Activated T-helper 1 cell treated with anti-CD3 and anti-CD28 coated beads, Interleukin-12 subunit alpha, Interleukin-12 subunit beta, Interleukin-2, Interleukin-4 antibody, amounts not matched to agents 30 ng/mL and 10 ng/mL and 1 ng/mL, durations not matched to agents 14 hours and 24 hours and 36 hours (primary cell): ENCODE measurements at regions of chr20 and their contacts with region 1.

Region 1: DNA sequence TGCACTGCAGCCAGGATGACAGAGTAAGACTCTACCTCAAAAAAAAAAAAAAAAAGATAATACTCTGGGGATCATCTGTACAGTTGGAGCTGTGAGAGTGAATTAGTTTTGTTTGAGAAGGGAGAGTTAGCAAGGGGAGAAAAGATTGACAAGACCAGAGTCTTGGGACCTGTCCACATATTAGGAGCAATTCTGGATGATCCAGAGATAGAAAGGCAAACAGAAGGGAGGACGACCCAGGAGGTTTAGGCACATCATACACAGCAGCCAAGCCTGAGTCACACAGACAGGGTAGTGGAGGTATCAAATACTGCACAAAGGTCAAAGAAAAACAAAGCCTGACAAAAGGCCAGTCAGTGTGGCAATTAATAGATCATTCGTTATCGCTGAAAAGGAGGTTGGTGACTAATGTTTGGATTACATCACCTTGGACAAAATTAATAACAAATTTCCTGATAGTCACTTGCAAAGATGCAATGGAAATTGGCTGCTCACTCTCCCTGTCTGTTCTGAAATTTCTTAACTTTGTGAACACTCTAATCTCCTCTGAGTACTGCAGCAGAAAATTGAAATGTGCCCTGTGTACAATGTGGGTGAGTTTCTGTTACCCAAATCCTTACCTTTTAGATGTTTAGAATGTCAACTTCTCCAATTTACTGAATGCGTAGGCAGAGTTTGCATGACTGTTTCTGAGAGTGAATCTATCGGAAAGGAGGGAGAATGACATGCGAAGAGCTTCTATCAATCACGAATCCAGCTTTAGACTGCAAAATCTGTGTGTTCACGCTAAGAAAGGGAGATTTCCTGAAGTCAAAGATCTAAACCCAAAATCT is 105.4 kb downstream of the TSHZ2 start:
- DNase-seq: no peak
- H3K4me3 Mint-ChIP-seq: no peak overlapping the region
- H3K27ac Mint-ChIP-seq: no peak overlapping the region
- H3K4me1 Mint-ChIP-seq: peaks cover 19% of the 10 kb centered on the region
- H3K27me3 Mint-ChIP-seq: no peaks in the 10 kb centered on the region

Region 2: GRCh38 chr20:52923123-52923937 is 154.3 kb before region 1 on chr20:
- intact Hi-C with region 1: loop called (anchors 5 kb)
- DNase-seq: no peak
- H3K4me3 Mint-ChIP-seq: no peak overlapping the region
- H3K27ac Mint-ChIP-seq: no peak overlapping the region
- H3K4me1 Mint-ChIP-seq: no peaks in the 10 kb centered on the region
- H3K27me3 Mint-ChIP-seq: no peaks in the 10 kb centered on the region

Region 3: DNA sequence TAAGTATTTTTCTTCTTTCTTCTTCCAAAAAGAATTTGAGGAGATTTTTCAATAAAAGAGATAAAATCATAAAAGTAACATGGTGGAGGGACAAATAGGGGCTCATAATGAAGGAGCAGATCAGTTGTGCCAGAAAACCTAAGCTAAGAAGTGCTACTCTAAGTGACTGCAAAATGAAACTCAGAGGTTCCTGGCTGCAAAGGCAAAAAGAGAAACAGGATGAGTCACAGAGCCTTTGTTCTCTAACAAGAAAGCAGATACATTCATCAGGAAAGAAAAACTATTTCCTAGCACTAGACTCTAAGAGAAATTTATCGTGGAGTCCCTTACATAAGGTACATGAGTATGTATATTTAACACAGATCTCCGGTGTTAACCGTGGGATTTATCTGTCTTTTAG is 55.7 kb before region 1 on chr20:
- intact Hi-C with region 1: loop called (anchors 1 kb)
- DNase-seq: peak; percentile 33
- H3K4me3 Mint-ChIP-seq: peak overlapping the region; percentile 24
- H3K27ac Mint-ChIP-seq: peak overlapping the region; percentile 90
- H3K4me1 Mint-ChIP-seq: peaks cover 87% of the 10 kb centered on the region
- H3K27me3 Mint-ChIP-seq: no peaks in the 10 kb centered on the region

Region 4: GRCh38 chr20:53157443-53158408 is 80.1 kb after region 1 on chr20:
- intact Hi-C with region 1: no loop called
- DNase-seq: no peak
- H3K4me3 Mint-ChIP-seq: peak overlapping the region; percentile 12
- H3K27ac Mint-ChIP-seq: peak overlapping the region; percentile 50
- H3K4me1 Mint-ChIP-seq: peaks cover 65% of the 10 kb centered on the region
- H3K27me3 Mint-ChIP-seq: no peaks in the 10 kb centered on the region

Region 5: DNA sequence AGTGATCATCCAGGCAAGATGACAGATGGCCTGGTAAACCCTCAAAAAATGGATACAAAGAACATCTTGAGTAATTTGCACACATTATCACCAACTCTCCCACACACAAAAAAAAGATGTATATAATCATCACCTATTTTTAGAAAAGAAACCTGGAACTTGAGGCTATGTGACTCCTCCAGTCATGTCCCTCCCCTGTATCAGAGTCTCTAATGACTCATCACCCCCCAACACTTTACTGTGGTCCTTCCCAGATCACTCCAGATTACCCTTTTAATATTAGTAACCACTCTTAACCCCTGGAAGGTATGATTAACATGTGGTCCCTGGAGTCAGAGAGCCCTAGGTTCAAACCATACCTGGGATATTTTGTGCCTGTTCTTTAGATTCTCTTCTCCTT is 371.3 kb after region 1 on chr20:
- intact Hi-C with region 1: no loop called
- DNase-seq: no peak
- H3K4me3 Mint-ChIP-seq: no peak overlapping the region
- H3K27ac Mint-ChIP-seq: no peak overlapping the region
- H3K4me1 Mint-ChIP-seq: no peaks in the 10 kb centered on the region
- H3K27me3 Mint-ChIP-seq: no peaks in the 10 kb centered on the region

Region 6: GRCh38 chr20:53547664-53548239 is 470.2 kb after region 1 on chr20:
- intact Hi-C with region 1: loop called (anchors 10 kb)
- DNase-seq: peak; percentile 24
- H3K4me3 Mint-ChIP-seq: no peak overlapping the region
- H3K27ac Mint-ChIP-seq: no peak overlapping the region
- H3K4me1 Mint-ChIP-seq: no peaks in the 10 kb centered on the region
- H3K27me3 Mint-ChIP-seq: no peaks in the 10 kb centered on the region

Region 7: DNA sequence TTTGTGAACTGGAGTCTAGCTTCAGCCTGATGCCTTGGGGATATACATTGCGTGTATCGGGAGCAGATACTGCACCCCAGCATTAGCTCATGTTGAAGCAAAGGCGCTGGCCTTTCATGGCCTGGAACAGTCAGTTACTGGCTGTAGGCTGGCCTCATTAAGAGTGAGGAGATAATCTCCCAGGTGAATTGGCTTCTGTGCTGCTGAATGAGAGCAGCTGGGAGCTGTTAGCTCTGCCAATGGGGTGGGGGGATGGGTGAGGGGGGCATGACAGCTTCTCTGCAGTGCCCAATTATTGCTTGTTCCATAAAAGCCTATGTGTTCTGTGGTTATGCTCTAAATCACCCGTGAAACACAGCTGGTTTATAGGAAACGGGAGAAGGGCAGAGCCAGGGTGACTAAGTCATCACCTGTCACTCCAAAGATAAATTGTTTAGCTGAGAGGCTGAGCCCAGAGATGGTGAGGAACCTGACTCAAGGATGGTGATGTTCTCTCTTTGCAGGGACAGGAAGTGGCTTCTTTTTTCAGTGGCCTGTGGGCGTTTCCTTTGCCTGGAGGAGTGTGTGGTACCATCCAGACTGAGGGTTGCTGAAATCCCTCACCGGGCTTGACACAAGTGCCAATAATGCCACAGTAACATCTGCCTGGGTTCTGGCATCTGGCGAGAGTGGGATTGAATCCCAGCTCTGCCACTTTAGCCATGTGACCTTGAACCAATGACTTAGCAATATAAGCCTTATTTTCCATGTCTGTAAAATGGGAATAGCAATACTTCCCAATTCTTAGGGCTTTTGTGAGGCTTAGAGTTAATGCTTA is 822.0 kb after region 1 on chr20:
- intact Hi-C with region 1: loop called (anchors 10 kb)
- DNase-seq: peak; percentile 74
- H3K4me3 Mint-ChIP-seq: peak overlapping the region; percentile 69
- H3K27ac Mint-ChIP-seq: peak overlapping the region; percentile 87
- H3K4me1 Mint-ChIP-seq: peaks cover 56% of the 10 kb centered on the region
- H3K27me3 Mint-ChIP-seq: no peaks in the 10 kb centered on the region